GM18951 (cell line): ENCODE measurements at regions of chr5 and their contacts with region 1.

Region 1: GRCh38 chr5:132829742-132830435 is 558 bp downstream of the SHROOM1 start:
- POLR2A ChIP-seq: no peak

Region 2: GRCh38 chr5:132386644-132387286 is 443.1 kb before region 1 on chr5:
- in situ Hi-C with region 1: loop called (anchors 25 kb)
- POLR2A ChIP-seq: peak; percentile 26